ENCODE measurements at regions of chr1 and their contacts with region 1.

Region 1: DNA sequence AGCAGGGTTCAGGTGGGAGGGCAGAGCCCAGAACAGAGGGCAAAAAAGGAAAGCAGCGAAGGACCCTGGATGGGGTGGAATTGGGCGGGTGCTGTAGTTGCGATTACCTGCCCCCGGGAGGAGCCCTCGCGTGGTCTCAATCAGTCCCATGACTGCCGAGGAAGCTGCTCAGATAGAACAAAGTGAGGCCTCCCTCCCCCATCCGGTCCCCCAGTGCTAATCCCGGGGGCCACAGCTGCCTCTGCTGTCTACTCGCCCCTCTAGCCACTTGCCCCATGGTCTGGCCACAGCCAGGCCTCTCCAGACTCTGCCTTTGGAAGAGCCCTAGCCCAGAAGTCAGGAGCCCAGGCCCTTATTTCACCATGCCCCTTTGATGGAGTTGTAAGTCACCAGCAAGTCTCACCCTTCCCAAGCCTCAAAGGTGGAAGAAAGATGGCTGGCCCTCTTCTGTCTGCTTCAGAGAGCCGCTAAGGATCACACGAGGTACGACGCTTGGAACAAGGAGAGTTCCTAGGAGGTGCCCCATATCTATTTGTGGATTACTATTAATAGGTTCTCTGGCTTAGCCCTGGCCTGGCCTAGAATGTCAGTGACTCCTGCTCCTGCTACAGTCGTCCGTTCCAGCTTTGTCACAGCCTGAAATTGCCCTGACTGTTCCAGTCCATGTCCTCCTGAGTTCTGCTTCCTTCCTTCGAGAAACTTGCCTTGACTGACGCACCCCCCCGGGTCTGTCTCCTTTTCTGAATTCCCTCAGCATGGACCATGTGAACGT is 16.4 kb downstream of the ECHDC2 start:
- DNase-seq: no peak
- ATAC-seq: peak; percentile 82
- H3K4me3 ChIP-seq: no peak overlapping the region
- H3K27ac ChIP-seq: no peak overlapping the region
- H3K4me1 ChIP-seq: no peaks in the 10 kb centered on the region
- H3K27me3 ChIP-seq: no peaks in the 10 kb centered on the region
- CTCF ChIP-seq: peak; percentile 74

Region 2: GRCh38 chr1:53014791-53015507 is 109.8 kb after region 1 on chr1:
- CTCF ChIA-PET with region 1: interaction called, 10 read pairs
- POLR2A ChIA-PET with region 1: no interaction called
- in situ Hi-C with region 1: no loop called
- intact Hi-C with region 1: no loop called
- DNase-seq: peak; percentile 71
- ATAC-seq: peak; percentile 96
- H3K4me3 ChIP-seq: peak overlapping the region; percentile 69 to 84
- H3K27ac ChIP-seq: peak overlapping the region; percentile 84
- H3K4me1 ChIP-seq: 0 out of 2 replicates have a peak, but pooled peaks cover 2% of the 10 kb centered on the region
- H3K27me3 ChIP-seq: no peaks in the 10 kb centered on the region
- CTCF ChIP-seq: no peak

Region 3: GRCh38 chr1:53182111-53182593 is 277.0 kb after region 1 on chr1:
- CTCF ChIA-PET with region 1: no interaction called
- POLR2A ChIA-PET with region 1: no interaction called
- in situ Hi-C with region 1: no loop called
- intact Hi-C with region 1: loop called (anchors 10 kb)
- DNase-seq: no peak
- ATAC-seq: peak; percentile 79
- H3K4me3 ChIP-seq: no peak overlapping the region
- H3K27ac ChIP-seq: peak overlapping the region; percentile 45; the same call in 1 of the 2 replicates
- H3K4me1 ChIP-seq: no peaks in the 10 kb centered on the region
- H3K27me3 ChIP-seq: no peaks in the 10 kb centered on the region
- CTCF ChIP-seq: peak; percentile 93